ENCODE measurements at regions of chr9 and their contacts with region 1.

Region 1: DNA sequence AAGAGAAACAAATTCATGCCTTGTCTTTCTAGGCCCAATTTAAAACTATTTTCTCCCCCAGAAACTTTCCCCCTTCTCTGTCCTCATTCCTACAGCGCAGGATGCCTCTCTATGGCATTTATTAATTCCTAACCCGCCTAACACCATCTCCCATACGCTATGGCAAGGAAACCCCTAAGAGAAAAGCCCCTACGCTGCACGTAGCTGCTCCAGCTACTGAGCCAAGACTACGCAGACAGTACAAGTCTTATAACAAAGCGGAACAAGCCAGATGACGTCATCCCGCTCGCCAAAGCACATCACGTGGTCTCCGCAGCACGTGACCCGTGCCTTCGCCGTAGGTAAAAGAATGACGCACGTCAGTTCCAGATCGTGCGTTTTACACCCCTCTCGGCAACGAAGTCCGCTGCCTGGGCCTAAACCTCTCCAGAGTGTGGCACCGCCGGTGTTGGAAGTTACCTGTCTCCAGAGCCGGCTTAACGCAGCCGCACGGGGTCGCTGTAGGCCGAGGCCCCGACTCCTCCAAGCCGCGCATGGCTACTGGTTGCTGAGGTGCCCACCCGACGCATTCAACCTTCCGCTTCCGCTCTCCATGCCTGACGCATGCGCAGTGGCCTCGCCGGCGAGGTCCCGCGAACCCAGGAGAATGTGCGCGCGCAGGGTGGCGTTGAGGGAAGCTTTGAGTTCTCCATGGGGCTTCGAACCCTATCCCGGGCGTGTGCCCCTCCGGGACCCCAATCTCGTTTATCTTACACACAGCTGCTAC is at the start of gene TRMO:
- DNase-seq: peak; percentile 99
- ATAC-seq: peak; percentile 79
- H3K4me3 Mint-ChIP-seq: peak within 1 kb of the TSS; percentile 82
- H3K27ac Mint-ChIP-seq: peak within 1 kb of the TSS; percentile 95
- H3K4me1 Mint-ChIP-seq: peaks cover 39% of the 10 kb centered on the region
- H3K27me3 Mint-ChIP-seq: peaks cover 2% of the 10 kb centered on the region
- CTCF ChIP-seq: peak; percentile 63
- total RNA-seq, gene TRMO: 12.6 to 13.3 TPM

Region 2: DNA sequence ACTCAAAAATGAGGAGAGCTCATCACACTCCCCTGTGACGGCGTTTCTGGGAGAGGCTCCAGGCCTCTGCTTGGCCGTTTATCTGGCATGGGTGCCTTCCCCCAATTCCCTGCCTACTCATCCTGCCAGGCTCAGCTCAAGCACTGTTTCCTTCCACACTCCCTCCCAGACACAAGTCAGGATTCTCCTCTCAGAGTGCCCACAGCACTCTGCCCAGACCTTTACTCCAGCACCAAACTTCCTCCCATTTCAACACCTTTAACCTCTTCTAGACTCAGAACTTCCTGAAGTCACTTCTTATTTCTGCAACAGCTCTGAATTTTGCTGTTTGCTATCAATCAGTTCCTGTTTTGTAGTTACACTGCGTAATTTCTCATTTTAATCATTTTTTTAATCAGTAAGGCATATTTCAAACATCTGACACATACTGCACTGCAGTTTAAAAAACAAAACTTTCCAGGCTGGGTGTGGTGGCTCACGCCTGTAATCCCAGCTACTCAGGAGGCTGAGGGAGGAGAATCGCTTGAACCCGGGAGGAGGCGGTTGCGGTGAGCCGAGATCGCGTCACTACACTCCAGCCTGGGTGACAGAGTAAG is 15.8 kb before region 1 on chr9:
- CTCF ChIA-PET with region 1: interaction called, 100 read pairs
- POLR2A ChIA-PET with region 1: interaction called, 86 read pairs
- intact Hi-C with region 1: no loop called
- DNase-seq: peak; percentile 43
- ATAC-seq: peak; percentile 10
- H3K4me3 Mint-ChIP-seq: peak overlapping the region; percentile 55
- H3K27ac Mint-ChIP-seq: peak overlapping the region; percentile 98
- H3K4me1 Mint-ChIP-seq: peaks cover 75% of the 10 kb centered on the region
- H3K27me3 Mint-ChIP-seq: no peaks in the 10 kb centered on the region
- CTCF ChIP-seq: no peak

Region 3: GRCh38 chr9:97954550-97954989 is 32.4 kb after region 1 on chr9:
- CTCF ChIA-PET with region 1: interaction called, 76 read pairs
- POLR2A ChIA-PET with region 1: interaction called, 15 read pairs
- intact Hi-C with region 1: loop called (anchors 1 kb)
- DNase-seq: peak; percentile 73
- ATAC-seq: peak; percentile 93
- H3K4me3 Mint-ChIP-seq: no peak overlapping the region
- H3K27ac Mint-ChIP-seq: no peak overlapping the region
- H3K4me1 Mint-ChIP-seq: peaks cover 7% of the 10 kb centered on the region
- H3K27me3 Mint-ChIP-seq: no peaks in the 10 kb centered on the region
- CTCF ChIP-seq: peak; percentile 78

Region 4: DNA sequence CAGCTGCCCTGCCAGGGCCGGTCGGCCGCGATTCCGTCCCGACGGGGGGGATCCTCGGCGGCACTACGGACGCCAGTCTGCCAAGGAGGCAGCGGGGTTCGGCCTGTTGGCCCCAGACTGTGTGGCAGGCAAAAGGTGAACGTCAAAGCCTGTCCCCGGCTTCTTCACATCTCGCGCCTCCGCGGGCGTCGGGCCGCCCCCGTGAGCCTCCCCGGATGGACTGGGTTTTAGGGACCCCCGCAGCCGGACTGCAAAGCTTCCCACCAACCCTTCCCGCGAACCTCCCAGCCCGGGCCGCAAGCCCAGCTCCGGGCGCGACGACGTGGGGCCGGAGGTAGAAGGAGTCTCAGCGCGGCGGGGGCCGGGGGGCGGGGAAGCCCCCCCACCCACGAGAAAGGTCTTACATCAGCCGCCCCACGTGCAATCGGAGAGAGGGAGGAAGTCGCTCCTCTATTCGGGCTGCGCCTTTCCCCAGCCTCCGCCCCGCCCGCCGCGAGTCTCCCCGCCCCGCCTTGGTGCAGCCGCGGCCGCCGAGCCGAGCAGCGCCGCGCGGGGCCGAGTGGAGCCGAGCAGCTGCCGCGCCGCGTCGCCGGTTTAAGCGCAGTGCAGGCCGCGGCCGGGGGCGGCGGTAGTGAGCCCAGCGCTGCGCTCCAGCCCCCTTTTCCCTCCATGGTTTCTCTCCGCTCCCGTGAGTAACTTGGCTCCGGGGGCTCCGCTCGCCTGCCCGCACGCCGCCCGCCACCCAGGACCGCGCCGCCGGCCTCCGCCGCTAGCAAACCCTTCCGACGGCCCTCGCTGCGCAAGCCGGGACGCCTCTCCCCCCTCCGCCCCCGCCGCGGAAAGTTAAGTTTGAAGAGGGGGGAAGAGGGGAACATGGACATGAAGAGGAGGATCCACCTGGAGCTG is 60.8 kb after region 1 on chr9 and contains the start of gene ANP32B:
- CTCF ChIA-PET with region 1: interaction called, 74 read pairs
- POLR2A ChIA-PET with region 1: interaction called, 121 read pairs
- intact Hi-C with region 1: loop called (anchors 2 kb)
- DNase-seq: peak; percentile 96
- ATAC-seq: peak; percentile 88
- H3K4me3 Mint-ChIP-seq: peak within 1 kb of the TSS; percentile 83
- H3K27ac Mint-ChIP-seq: peak within 1 kb of the TSS; percentile 93
- H3K4me1 Mint-ChIP-seq: peaks cover 53% of the 10 kb centered on the region
- H3K27me3 Mint-ChIP-seq: no peaks in the 10 kb centered on the region
- CTCF ChIP-seq: peak; percentile 92
- total RNA-seq, gene ANP32B: 374 to 389 TPM

Region 5: DNA sequence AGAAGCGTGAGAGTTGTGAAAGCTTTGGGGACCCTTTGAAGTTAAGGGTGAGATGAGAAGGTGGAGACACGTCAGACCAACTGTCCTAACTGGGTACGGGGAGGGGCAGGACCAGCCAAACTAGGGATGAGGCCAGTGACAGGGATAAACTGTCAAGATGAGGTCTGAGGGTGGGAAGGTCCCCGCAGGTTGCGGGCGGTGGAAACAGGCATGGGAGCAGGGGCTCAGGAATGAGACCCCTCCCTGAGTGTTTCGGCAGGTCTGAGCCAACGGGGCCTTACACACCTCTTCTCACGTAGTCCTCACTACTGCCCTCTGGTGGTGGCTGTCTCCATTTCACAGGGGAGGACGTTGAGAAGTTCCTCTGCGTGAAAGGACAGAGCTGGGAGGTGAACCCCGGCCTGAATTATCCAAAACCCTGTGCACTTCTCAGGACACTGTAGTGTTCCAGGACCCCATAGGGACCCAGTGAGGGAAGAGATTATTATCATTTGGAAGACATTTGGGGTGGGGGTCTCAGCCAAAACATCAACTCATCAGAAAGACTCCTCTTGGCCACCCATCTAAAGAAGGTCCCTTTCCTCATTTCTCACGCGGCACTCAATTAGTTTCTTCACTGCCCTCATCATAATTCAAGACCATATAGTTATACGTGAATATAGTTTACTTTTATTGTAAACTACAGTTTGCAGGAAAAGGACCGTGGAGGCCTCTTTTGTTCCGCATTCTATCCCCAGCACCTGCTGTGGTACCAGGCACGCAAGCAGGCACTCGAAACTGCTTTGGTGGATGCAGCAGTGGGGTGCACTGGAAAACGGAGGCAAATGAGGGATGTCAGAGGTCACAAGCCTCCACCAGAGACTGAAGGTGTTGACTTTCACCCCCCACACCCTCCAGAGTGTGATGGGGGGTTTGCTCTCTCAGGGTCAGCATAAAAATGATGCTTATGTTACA is 112.7 kb after region 1 on chr9:
- CTCF ChIA-PET with region 1: interaction called, 38 read pairs
- POLR2A ChIA-PET with region 1: interaction called, 6 read pairs
- intact Hi-C with region 1: loop called (anchors 1 kb)
- DNase-seq: peak; percentile 96
- ATAC-seq: peak; percentile 99
- H3K4me3 Mint-ChIP-seq: peak overlapping the region; percentile 13
- H3K27ac Mint-ChIP-seq: no peak overlapping the region
- H3K4me1 Mint-ChIP-seq: peaks cover 13% of the 10 kb centered on the region
- H3K27me3 Mint-ChIP-seq: no peaks in the 10 kb centered on the region
- CTCF ChIP-seq: peak; percentile 69

Region 6: DNA sequence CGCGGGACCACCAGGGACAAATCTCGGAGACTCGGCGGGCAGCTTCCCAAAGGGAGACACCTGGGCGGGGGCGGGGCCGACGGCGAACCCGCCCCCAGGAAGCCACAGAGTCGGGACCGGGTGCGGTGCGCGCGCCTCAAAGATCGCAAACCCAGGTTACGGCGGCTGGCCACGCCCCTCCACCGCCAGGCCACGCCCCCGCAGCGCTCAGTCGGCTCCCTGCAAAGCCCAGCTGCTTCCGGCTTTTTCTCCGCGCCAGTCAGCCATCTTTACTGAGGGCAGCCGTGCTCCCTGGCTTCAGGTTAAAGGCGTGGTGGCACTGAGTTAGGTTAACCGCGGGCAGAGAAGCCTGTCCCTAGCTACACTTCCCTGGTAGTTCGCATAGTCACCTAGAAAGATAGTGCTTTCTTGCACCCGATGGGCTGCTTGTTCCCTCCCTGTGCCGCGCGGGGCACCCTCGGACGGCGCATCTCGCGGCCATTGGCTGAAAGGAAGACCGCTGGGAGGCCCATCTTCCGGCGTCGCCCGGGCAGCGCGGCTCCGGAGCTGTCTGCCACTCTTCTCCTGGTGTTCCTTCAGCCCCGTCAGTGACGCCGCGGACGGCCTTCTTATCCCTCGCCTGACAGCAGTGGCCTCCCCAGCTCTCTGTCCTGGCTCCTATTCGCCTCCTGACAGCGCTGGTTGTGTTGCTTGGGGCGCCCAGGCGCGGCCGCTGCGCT is 333.6 kb after region 1 on chr9 and contains the start of gene TBC1D2:
- CTCF ChIA-PET with region 1: interaction called, 19 read pairs
- POLR2A ChIA-PET with region 1: interaction called, 14 read pairs
- intact Hi-C with region 1: loop called (anchors 5 kb)
- DNase-seq: peak; percentile 97
- ATAC-seq: peak; percentile 93
- H3K4me3 Mint-ChIP-seq: peak within 1 kb of the TSS; percentile 85
- H3K27ac Mint-ChIP-seq: peak within 1 kb of the TSS; percentile 97
- H3K4me1 Mint-ChIP-seq: peaks cover 16% of the 10 kb centered on the region
- H3K27me3 Mint-ChIP-seq: no peaks in the 10 kb centered on the region
- CTCF ChIP-seq: peak; percentile 18
- total RNA-seq, gene TBC1D2: 1.5 TPM